ENCODE measurements at regions of chr17 and their contacts with region 1.

Region 1: GRCh38 chr17:69913216-69913615 is 161.8 kb upstream of the KCNJ16 start:
- DNase-seq: no peak
- H3K4me3 ChIP-seq: peak overlapping the region; percentile 33 to 41
- H3K27ac ChIP-seq: peak overlapping the region; percentile 27 to 63
- H3K4me1 ChIP-seq: no peaks in the 10 kb centered on the region
- H3K27me3 ChIP-seq: no peaks in the 10 kb centered on the region
- CTCF ChIP-seq: no peak

Region 2: DNA sequence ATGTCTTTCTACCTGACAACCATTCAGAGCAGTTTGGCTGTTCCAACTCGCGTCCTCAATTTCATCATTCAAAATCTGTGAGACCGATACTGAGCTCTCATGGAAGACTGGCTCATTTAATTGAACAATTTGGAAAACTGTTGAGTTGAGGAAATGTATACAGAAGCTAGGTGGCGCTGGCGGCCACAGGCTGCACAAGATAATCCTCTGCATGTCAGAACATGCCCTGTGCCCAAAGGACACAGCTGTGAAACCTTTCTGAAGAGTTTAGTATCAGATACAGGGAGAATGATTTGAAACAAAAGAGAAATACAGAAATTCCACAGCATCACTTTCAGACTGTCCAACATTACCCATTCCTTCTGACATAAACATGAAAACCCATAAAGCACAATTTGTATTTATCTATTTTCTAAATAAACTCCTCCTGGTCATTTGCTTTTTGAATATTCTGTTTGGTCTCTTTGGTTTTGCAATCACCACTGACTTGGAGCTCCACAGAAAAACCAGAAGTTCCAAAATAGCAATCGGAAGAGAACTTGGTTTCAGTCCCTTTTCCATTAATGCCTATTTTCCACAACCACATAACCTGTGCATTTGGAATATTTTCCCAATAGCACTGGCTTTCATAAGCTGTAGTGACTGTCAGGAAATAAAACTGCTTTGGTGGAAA is 305.9 kb before region 1 on chr17:
- intact Hi-C with region 1: loop called (anchors 5 kb)
- DNase-seq: peak in 1 of 2 donors; percentile 86
- H3K4me3 ChIP-seq: no peak overlapping the region
- H3K27ac ChIP-seq: peak overlapping the region; percentile 32 to 71
- H3K4me1 ChIP-seq: peaks cover 0 to 23% of the 10 kb centered on the region in 2 donors
- H3K27me3 ChIP-seq: no peaks in the 10 kb centered on the region
- CTCF ChIP-seq: peak; percentile 72 to 82 (median 79)

Region 3: GRCh38 chr17:69773081-69773480 is 140.1 kb before region 1 on chr17:
- intact Hi-C with region 1: loop called (anchors 10 kb)
- DNase-seq: no peak
- H3K4me3 ChIP-seq: no peak overlapping the region
- H3K27ac ChIP-seq: no peak overlapping the region
- H3K4me1 ChIP-seq: peaks cover 0 to 6% of the 10 kb centered on the region in 2 donors
- H3K27me3 ChIP-seq: no peaks in the 10 kb centered on the region
- CTCF ChIP-seq: no peak

Region 4: GRCh38 chr17:69945698-69946185 is 32.5 kb after region 1 on chr17:
- intact Hi-C with region 1: no loop called
- DNase-seq: no peak
- H3K4me3 ChIP-seq: no peak overlapping the region
- H3K27ac ChIP-seq: no peak overlapping the region
- H3K4me1 ChIP-seq: peaks cover 0 to 2% of the 10 kb centered on the region in 2 donors
- H3K27me3 ChIP-seq: no peaks in the 10 kb centered on the region
- CTCF ChIP-seq: no peak

Region 5: GRCh38 chr17:71371809-71372208 is 1458.6 kb after region 1 on chr17:
- intact Hi-C with region 1: no loop called
- DNase-seq: no peak
- H3K4me3 ChIP-seq: no peak overlapping the region
- H3K27ac ChIP-seq: no peak overlapping the region
- H3K4me1 ChIP-seq: no peaks in the 10 kb centered on the region
- H3K27me3 ChIP-seq: no peaks in the 10 kb centered on the region
- CTCF ChIP-seq: no peak